Activated CD4-positive, alpha-beta T cell treated with anti-CD3 and anti-CD28 coated beads, Interleukin-2, amount 10 ng/mL, durations not matched to agents 24 days and 14 days (primary cell): ENCODE measurements at regions of chr12 and their contacts with region 1.

Region 1: GRCh38 chr12:67441736-67442346 is 172.7 kb downstream of the CAND1 start:
- DNase-seq: peak; percentile 93
- H3K4me3 Mint-ChIP-seq: no peak overlapping the region
- H3K27ac Mint-ChIP-seq: no peak overlapping the region
- H3K4me1 Mint-ChIP-seq: peaks cover 12% of the 10 kb centered on the region
- H3K27me3 Mint-ChIP-seq: peaks cover 13% of the 10 kb centered on the region

Region 2: DNA sequence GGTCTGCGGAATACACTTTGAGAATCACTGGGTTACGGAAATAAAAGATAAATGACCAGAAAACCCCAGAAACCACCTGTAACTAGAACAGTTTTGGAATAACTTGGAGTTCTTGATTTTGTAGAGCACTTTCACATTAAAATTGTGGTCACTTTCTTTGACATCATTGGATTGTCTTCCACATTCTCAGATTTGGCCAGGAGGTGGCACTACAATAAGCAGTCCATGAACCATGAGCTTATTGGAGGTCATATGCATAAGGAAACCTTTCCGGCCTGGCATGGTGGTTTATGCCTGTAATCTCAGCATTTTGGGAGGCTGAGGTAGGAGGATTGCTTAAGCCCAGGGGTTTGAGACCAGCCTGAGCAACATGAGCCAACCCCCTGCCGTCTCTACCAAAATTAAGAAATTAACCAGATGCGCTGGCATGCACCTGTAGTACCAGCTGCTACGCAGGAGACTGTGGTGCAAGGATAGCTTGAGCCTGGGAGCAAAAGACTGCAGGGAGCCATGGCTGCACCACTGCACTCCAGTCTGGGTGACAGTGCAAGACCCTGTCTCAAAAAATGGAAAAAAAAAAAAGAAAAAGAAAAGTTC is 280.4 kb before region 1 on chr12:
- intact Hi-C with region 1: loop called (anchors 5 kb)
- DNase-seq: peak; percentile 79
- H3K4me3 Mint-ChIP-seq: no peak overlapping the region
- H3K27ac Mint-ChIP-seq: no peak overlapping the region
- H3K4me1 Mint-ChIP-seq: no peaks in the 10 kb centered on the region
- H3K27me3 Mint-ChIP-seq: peaks cover 11% of the 10 kb centered on the region

Region 3: GRCh38 chr12:67268896-67269631 is 172.8 kb before region 1 on chr12 and contains the start of gene CAND1:
- intact Hi-C with region 1: loop called (anchors 10 kb)
- DNase-seq: peak; percentile 99
- H3K4me3 Mint-ChIP-seq: peak within 1 kb of the TSS; percentile 90
- H3K27ac Mint-ChIP-seq: peak within 1 kb of the TSS; percentile 100
- H3K4me1 Mint-ChIP-seq: peaks cover 30% of the 10 kb centered on the region
- H3K27me3 Mint-ChIP-seq: no peaks in the 10 kb centered on the region
- total RNA-seq, gene CAND1: 202 and 216 TPM in 2 replicates

Region 4: DNA sequence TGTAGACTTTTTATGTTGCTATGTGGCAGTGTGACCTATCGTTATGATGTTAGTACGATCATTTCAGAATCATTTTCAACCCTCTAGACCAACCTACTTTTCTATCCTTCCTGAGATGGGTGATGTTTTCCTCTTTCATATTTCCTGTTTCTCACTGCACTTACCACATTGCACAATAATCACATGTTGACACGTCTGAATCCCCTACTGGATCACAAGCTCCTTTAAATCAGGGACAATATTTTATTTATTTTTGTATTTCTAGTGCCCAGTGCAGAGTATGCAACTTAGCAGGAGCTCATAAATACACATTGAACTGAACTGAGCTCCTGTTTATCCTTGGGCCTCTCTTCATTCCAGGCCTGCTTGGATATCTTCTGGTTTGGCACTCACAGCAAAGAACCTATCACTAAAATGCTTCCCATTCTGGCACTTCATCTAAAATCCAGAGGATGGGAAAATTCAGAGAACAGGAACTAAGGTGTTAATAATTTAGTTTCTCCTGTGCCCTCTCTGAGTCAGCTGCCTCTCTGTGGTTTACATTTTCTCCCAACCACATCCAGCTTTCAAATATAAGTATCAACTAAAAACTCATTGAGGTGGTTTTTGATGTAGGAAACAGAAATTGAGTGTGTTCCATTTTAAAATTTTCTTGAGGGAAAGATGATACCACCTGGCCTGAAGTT is 137.3 kb after region 1 on chr12:
- intact Hi-C with region 1: loop called (anchors 2 kb)
- DNase-seq: peak; percentile 76
- H3K4me3 Mint-ChIP-seq: peak overlapping the region; percentile 17
- H3K27ac Mint-ChIP-seq: peak overlapping the region; percentile 52
- H3K4me1 Mint-ChIP-seq: peaks cover 24% of the 10 kb centered on the region
- H3K27me3 Mint-ChIP-seq: peaks cover 22% of the 10 kb centered on the region

Region 5: DNA sequence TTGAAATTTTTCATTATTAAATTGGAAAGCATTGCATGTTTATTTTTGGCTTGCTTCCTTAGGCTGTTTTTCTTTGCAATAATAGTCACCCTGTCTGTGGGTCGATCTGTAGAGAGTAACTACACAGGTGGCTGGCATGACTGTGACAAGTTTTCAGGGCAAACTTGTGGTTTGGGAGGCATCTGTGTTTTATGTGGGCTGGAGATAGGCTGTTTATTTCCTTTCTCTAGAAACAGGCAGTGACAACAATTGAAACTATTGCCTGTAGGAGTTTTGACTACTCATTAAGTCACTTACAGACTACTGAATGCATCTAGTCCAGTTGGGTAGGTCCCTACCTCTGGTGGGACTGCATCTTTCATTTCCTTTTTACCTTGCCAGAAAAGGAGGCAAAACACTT is 362.3 kb after region 1 on chr12:
- intact Hi-C with region 1: loop called (anchors 5 kb)
- DNase-seq: peak; percentile 80
- H3K4me3 Mint-ChIP-seq: no peak overlapping the region
- H3K27ac Mint-ChIP-seq: no peak overlapping the region
- H3K4me1 Mint-ChIP-seq: peaks cover 11% of the 10 kb centered on the region
- H3K27me3 Mint-ChIP-seq: peaks cover 8% of the 10 kb centered on the region